ENCODE measurements at regions of chr6 and their contacts with region 1.

Region 1: GRCh38 chr6:128731249-128732165 is 151.4 kb upstream of the LAMA2 start:
- DNase-seq: peak; percentile 22 to 63
- H3K4me3 ChIP-seq: no peak overlapping the region
- H3K27ac ChIP-seq: no peak overlapping the region
- H3K4me1 ChIP-seq: no peaks in the 10 kb centered on the region
- H3K27me3 ChIP-seq: no peaks in the 10 kb centered on the region
- CTCF ChIP-seq: peak; percentile 86

Region 2: GRCh38 chr6:127606131-127606562 is 1125.4 kb before region 1 on chr6:
- CTCF ChIA-PET with region 1: no interaction called
- POLR2A ChIA-PET with region 1: no interaction called
- intact Hi-C with region 1: loop called (anchors 10 kb)
- DNase-seq: peak in 1 of 2 experiments; percentile 45
- H3K4me3 ChIP-seq: no peak overlapping the region
- H3K27ac ChIP-seq: no peak overlapping the region
- H3K4me1 ChIP-seq: peaks cover 20% of the 10 kb centered on the region
- H3K27me3 ChIP-seq: no peaks in the 10 kb centered on the region
- CTCF ChIP-seq: peak; percentile 77

Region 3: DNA sequence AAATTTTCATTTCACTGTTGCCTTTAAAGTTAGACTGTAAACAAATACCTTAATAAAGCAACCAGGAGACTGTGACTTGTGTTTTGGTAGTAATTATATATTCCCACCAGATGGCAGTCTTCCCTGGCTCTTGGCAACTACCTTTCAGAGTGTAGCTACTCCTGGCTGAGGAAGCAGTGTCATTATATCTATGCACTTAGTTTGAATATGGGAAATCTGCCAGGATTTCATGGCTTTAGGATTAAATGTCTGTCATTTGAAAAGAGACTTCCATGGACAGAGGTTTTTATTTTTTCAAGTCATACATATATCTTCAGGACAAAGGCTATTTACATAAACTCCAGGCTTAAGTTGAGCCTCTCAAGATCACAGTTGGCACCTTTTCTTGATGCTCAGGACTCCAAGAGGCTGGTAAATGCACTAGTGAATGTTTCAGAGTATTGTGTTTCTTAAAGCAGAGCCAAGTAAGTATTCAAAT is 994.5 kb before region 1 on chr6:
- CTCF ChIA-PET with region 1: interaction called, 3 read pairs
- POLR2A ChIA-PET with region 1: no interaction called
- intact Hi-C with region 1: loop called (anchors 2 kb)
- DNase-seq: peak; percentile 40 to 56
- H3K4me3 ChIP-seq: no peak overlapping the region
- H3K27ac ChIP-seq: no peak overlapping the region
- H3K4me1 ChIP-seq: no peaks in the 10 kb centered on the region
- H3K27me3 ChIP-seq: no peaks in the 10 kb centered on the region
- CTCF ChIP-seq: peak; percentile 92

Region 4: DNA sequence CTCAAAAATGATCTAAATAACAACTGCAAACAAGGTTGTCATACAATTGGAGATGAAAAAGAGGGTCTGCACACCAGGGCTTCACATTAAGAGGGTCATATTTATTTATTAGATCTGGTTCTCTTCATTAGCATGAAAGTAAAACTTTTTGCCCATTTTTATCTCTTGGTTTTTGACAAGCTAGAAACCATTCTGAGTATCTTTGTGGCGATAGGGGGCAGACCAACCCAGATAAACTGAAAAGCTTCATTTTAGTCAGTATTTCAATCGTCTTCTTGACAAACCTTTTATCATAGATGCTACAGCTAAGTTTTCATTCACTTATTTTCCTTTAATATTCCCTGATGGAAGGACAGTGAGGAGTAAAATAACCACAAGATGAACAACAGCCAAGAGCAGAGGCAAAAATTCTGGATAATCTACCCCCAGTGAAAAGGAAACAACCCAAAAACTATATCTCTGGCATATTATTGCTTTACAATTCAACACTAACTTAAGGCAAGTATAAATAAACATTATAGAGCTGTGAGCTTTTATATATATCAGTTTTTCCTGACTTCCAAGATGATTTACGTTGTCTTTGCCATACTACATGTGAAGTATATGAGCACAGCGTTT is 875.9 kb before region 1 on chr6:
- CTCF ChIA-PET with region 1: no interaction called
- POLR2A ChIA-PET with region 1: no interaction called
- intact Hi-C with region 1: loop called (anchors 5 kb)
- DNase-seq: peak in 1 of 2 experiments; percentile 6
- H3K4me3 ChIP-seq: no peak overlapping the region
- H3K27ac ChIP-seq: no peak overlapping the region
- H3K4me1 ChIP-seq: no peaks in the 10 kb centered on the region
- H3K27me3 ChIP-seq: no peaks in the 10 kb centered on the region
- CTCF ChIP-seq: peak; percentile 65

Region 5: GRCh38 chr6:128569737-128570679 is 161.5 kb before region 1 on chr6:
- CTCF ChIA-PET with region 1: no interaction called
- POLR2A ChIA-PET with region 1: no interaction called
- intact Hi-C with region 1: loop called (anchors 2 kb)
- DNase-seq: peak; percentile 74 to 100
- H3K4me3 ChIP-seq: peak overlapping the region; percentile 41; the same call in 1 of the 2 replicates
- H3K27ac ChIP-seq: peak overlapping the region; percentile 93
- H3K4me1 ChIP-seq: peaks cover 49% of the 10 kb centered on the region
- H3K27me3 ChIP-seq: no peaks in the 10 kb centered on the region
- CTCF ChIP-seq: no peak

Region 6: GRCh38 chr6:128914051-128914450 is 182.5 kb after region 1 on chr6:
- CTCF ChIA-PET with region 1: no interaction called
- POLR2A ChIA-PET with region 1: no interaction called
- intact Hi-C with region 1: no loop called
- DNase-seq: no peak
- H3K4me3 ChIP-seq: no peak overlapping the region
- H3K27ac ChIP-seq: no peak overlapping the region
- H3K4me1 ChIP-seq: no peaks in the 10 kb centered on the region
- H3K27me3 ChIP-seq: no peaks in the 10 kb centered on the region
- CTCF ChIP-seq: no peak

Region 7: GRCh38 chr6:130020907-130021629 is 1289.6 kb after region 1 on chr6:
- CTCF ChIA-PET with region 1: no interaction called
- POLR2A ChIA-PET with region 1: no interaction called
- intact Hi-C with region 1: loop called (anchors 2 kb)
- DNase-seq: peak; percentile 71 to 76
- H3K4me3 ChIP-seq: peak overlapping the region; percentile 70
- H3K27ac ChIP-seq: no peak overlapping the region
- H3K4me1 ChIP-seq: no peaks in the 10 kb centered on the region
- H3K27me3 ChIP-seq: no peaks in the 10 kb centered on the region
- CTCF ChIP-seq: peak; percentile 95

Measured in PC-9 (cell line).